ENCODE measurements at regions of chr12 and their contacts with region 1.

Region 1: GRCh38 chr12:54708826-54709225 is 60.7 kb upstream of the DCD start:
- DNase-seq: no peak
- ATAC-seq: no peak
- H3K4me3 ChIP-seq: no peak overlapping the region
- H3K27ac ChIP-seq: no peak overlapping the region
- H3K4me1 ChIP-seq: no peaks in the 10 kb centered on the region
- H3K27me3 ChIP-seq: no peaks in the 10 kb centered on the region; a peak in 1 of 4 replicates
- CTCF ChIP-seq: no peak
- EP300 ChIP-seq: no peak
- POLR2A ChIP-seq: no peak
- RAD21 ChIP-seq: no peak

Region 2: DNA sequence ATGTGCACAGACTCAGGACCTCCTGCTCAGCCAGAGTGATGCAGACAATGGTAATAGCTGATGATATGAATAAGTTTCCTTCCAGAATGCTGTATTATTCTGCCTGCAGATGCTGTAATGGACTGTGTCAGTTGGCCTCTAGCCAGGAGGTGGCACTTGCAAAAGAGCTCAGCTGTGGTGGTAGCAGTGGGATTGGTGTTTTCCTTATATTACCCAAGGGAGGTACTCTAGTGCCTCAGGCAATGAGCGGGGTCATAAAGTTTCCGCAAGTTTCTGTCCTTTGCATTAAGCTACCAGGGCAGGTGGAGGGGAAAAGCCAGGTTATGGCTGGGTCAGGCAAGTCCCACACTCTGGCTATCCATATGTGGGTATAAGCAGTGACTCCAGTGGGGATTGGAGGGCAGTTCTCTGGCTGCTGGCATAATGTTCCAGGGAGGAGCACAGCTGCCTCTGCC is 131.5 kb after region 1 on chr12:
- CTCF ChIA-PET with region 1: no interaction called
- POLR2A ChIA-PET with region 1: interaction called, 12 read pairs
- RAD21 ChIA-PET with region 1: no interaction called
- SMC1A ChIA-PET with region 1: no interaction called
- in situ Hi-C with region 1: no loop called
- intact Hi-C with region 1: no loop called
- DNase-seq: no peak
- ATAC-seq: no peak
- H3K4me3 ChIP-seq: no peak overlapping the region
- H3K27ac ChIP-seq: no peak overlapping the region
- H3K4me1 ChIP-seq: no peaks in the 10 kb centered on the region
- H3K27me3 ChIP-seq: no peaks in the 10 kb centered on the region
- CTCF ChIP-seq: no peak
- EP300 ChIP-seq: no peak
- POLR2A ChIP-seq: no peak
- RAD21 ChIP-seq: no peak